RWPE1 (cell line): ENCODE measurements at regions of chr21 and their contacts with region 1.

Region 1: GRCh38 chr21:36141513-36141925 is 6.6 kb downstream of the CBR3 start:
- DNase-seq: peak; percentile 94
- H3K27ac ChIP-seq: peak overlapping the region; percentile 45; the same call in 1 of the 2 replicates
- CTCF ChIP-seq: peak; percentile 82

Region 2: DNA sequence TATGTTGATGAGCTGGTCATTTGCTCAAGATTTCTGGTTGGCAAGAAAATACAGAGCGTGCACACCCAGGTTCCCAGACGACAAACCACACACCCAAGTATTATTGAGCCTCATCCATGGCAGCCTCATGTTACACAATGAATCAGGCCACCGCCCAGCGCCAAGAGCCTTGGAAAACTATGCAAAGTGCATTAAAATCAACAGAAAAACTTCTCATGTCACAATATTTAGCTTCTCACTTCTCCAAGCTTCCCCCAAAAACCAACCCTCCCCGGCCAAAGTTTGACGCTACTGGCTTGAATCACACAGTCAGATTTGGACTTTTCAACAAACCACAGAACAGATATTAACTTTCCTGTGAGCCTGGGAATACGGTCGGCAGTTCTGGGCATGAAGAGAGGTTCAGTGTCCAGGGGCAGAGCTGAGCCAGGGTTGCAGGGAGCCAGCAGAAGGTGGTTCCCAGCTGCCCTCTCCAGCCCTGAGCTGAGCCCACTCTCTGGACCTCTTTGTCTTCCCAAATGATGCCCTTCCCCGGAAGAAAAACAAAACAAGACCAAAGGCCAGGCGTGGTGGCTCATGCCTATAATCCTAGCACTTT is 152.3 kb before region 1 on chr21:
- CTCF ChIA-PET with region 1: no interaction called
- POLR2A ChIA-PET with region 1: no interaction called
- DNase-seq: no peak
- H3K27ac ChIP-seq: no peak overlapping the region
- CTCF ChIP-seq: no peak

Region 3: DNA sequence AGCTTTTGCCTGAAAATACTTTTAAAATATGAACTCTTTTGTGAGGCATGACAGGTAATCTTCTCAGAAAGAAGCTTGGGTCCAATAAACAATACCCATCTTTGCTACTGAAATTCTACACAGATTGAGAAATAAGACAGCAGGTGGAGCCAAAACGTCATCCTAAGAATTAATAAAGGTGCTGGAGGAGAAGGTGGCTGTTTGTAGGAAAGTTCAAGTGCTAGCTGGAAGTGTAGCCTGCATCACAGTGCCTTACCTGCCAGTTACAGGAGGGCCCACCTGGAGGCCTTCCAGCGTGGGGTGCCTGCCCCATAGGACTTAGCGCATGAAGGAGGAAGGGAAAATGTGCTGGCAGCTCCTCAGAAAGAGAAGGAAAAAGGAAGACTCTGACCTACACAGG is 1025.2 kb after region 1 on chr21:
- CTCF ChIA-PET with region 1: no interaction called
- POLR2A ChIA-PET with region 1: interaction called, 10 read pairs
- DNase-seq: peak; percentile 7
- H3K27ac ChIP-seq: no peak overlapping the region
- CTCF ChIP-seq: peak; percentile 9; the same call in 1 of the 2 replicates